ENCODE measurements at regions of chr7 and their contacts with region 1.

Region 1: GRCh38 chr7:23546897-23547572 is 15.3 kb upstream of the TRA2A start:
- DNase-seq: peak; percentile 91
- ATAC-seq: peak; percentile 96
- H3K4me3 ChIP-seq: no peak overlapping the region
- H3K27ac ChIP-seq: no peak overlapping the region
- H3K4me1 ChIP-seq: no peaks in the 10 kb centered on the region
- H3K27me3 ChIP-seq: peaks cover 2% of the 10 kb centered on the region; the same call in 1 of the 2 replicates
- CTCF ChIP-seq: peak; percentile 98
- POLR2A ChIP-seq: no peak
- RAD21 ChIP-seq: peak; percentile 87

Region 2: DNA sequence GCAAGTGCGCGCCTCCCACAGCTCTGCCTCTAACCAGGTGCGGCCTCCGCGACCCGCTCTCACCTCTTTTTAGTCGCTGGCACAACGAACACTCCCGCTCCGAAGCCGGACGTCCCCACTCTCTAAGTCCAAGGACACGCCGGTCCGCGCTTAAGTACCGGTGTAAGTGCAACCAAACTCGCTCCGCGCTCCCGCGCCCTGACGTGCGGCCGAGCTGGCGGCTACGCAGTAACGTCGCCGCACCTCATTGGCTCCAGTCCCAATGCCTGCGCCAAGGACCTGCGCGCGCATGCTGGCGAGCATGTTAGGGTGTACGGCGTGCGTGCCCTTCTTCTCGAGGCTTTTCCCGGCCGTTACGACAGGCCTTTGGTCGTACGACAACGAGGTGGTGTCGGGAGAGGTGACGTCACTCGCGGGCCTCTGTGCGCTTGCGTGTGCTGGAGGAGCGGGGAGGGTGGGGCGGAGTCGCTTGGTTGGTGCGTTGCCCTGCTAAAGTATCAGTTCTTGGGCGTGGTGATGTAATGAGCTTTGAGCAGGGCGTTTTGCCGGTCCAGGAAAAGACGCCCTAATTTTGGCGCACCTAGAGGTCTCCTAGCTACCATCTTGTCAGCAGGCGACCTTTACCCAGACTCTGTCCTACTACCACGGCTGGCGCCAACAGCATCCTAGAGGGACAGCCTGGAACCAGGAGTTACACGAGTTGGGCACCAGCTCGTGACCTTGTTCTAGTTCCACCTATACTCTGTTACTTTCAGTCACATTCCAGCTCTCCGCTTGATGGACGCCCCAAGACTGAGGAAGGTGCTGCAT is 1578.3 kb after region 1 on chr7 and contains the start of gene CYCS:
- CTCF ChIA-PET with region 1: no interaction called
- POLR2A ChIA-PET with region 1: no interaction called
- dilution Hi-C with region 1: no loop called
- in situ Hi-C with region 1: loop called (anchors 25 kb)
- intact Hi-C with region 1: no loop called
- DNase-seq: peak; percentile 100
- ATAC-seq: peak; percentile 95
- H3K4me3 ChIP-seq: peak within 1 kb of the TSS; percentile 59
- H3K27ac ChIP-seq: peak within 1 kb of the TSS; percentile 76
- H3K4me1 ChIP-seq: no peaks in the 10 kb centered on the region
- H3K27me3 ChIP-seq: no peaks in the 10 kb centered on the region
- CTCF ChIP-seq: no peak
- POLR2A ChIP-seq: peak; percentile 100
- RAD21 ChIP-seq: no peak
- total RNA-seq, gene CYCS: 22.9 and 65.3 TPM in 2 replicates